ENCODE measurements at regions of chr1 and their contacts with region 1.

Region 1: GRCh38 chr1:231211005-231211857 is 29.8 kb upstream of the GNPAT start:
- DNase-seq: peak; percentile 71 to 88
- H3K4me3 ChIP-seq: peak overlapping the region; percentile 52
- H3K27ac ChIP-seq: no peak overlapping the region
- H3K4me1 ChIP-seq: no peaks in the 10 kb centered on the region
- H3K27me3 ChIP-seq: peaks cover 20% of the 10 kb centered on the region
- CTCF ChIP-seq: peak; percentile 95

Region 2: DNA sequence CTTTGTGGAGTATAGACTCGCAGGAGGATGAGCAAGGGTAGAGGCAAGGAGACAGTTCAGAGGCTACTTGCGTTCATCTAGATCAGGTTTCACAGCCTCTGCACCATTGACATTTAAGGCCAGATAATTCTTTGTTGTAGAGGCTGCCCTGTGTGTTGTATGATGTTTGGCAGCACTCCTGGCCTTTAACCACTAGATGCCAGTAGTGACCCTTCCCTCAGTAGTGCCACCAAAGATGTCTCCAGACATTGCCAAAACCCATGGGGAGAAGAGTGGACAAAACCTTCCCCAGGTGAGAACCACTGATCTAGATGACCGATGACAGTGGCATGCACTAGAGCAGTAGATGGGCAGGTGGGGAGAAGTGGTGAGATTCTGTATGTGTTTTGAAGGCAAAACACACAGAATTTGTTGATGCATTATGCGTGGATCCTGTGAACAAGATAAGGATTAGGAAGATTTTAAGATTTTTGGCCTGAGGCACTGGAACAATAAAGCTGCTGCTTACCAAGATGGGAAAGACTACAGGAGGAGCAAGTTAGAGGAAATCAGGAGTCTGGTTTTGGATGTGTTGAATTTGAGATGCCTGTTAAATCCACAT is 578.9 kb before region 1 on chr1:
- CTCF ChIA-PET with region 1: interaction called, 3 read pairs
- POLR2A ChIA-PET with region 1: no interaction called
- intact Hi-C with region 1: loop called (anchors 1 kb)
- DNase-seq: peak; percentile 44 to 53
- H3K4me3 ChIP-seq: no peak overlapping the region
- H3K27ac ChIP-seq: no peak overlapping the region
- H3K4me1 ChIP-seq: no peaks in the 10 kb centered on the region
- H3K27me3 ChIP-seq: peaks cover 37% of the 10 kb centered on the region
- CTCF ChIP-seq: peak; percentile 74

Region 3: GRCh38 chr1:230867903-230868735 is 343.1 kb before region 1 on chr1 and contains the start of gene C1orf198:
- CTCF ChIA-PET with region 1: no interaction called
- POLR2A ChIA-PET with region 1: no interaction called
- intact Hi-C with region 1: loop called (anchors 10 kb)
- DNase-seq: peak in 1 of 2 experiments; percentile 75
- H3K4me3 ChIP-seq: peak within 1 kb of the TSS; percentile 78
- H3K27ac ChIP-seq: peak within 1 kb of the TSS; percentile 61
- H3K4me1 ChIP-seq: peaks cover 37% of the 10 kb centered on the region
- H3K27me3 ChIP-seq: no peaks in the 10 kb centered on the region
- CTCF ChIP-seq: no peak; the same call in 1 of the 2 replicates
- total RNA-seq, gene C1orf198: 20.5 and 24.5 TPM in 2 replicates

Region 4: DNA sequence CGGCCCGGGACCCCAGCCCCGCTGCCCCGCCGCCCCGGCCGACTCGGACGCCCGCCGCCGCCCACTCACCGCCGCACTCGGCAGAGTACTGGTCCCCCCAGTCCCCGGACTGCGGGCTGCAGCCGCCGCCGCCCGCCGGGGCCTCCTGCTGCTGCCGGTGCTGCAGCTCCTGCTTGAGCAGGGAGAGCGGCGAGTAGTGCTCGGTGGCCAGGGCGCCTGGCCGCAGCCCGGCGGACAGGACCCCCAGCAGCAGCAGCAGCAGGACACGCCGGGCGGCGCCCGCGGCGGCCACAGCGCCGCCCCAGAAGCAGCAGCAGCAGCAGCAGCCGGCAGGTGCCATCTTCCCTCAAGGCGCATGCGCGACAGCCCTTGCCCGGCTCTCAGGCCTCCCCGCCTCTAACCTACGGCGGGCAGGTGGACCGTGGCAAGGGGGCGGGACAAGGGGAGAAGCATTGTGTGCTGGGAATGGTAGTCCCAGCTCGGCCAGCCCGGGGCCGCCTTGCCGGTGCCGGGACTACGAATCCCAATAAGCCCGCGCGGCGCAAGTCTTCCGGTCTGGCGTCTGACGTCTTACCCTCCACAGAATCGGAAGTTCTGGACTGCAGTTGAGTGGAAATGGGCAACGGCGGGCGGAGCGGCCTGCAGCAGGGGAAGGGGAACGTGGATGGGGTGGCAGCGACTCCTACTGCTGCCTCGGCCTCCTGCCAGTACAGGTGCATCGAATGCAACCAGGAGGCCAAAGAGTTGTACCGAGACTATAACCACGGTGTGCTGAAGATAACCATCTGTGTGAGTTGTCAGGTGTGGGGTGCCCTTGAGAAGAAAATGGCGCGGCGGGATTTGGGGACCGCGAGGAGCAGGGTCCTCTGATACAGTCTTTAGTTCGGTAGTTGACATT is 232.5 kb before region 1 on chr1 and contains the starts of genes ARV1 and TTC13:
- CTCF ChIA-PET with region 1: interaction called, 3 read pairs
- POLR2A ChIA-PET with region 1: no interaction called
- intact Hi-C with region 1: loop called (anchors 1 kb)
- DNase-seq: peak; percentile 97 to 98
- H3K4me3 ChIP-seq: peak within 1 kb of the TSS; percentile 86
- H3K27ac ChIP-seq: no peak within 1 kb of the TSS
- H3K4me1 ChIP-seq: peaks cover 19% of the 10 kb centered on the region
- H3K27me3 ChIP-seq: no peaks in the 10 kb centered on the region
- CTCF ChIP-seq: peak; percentile 50; the same call in 1 of the 2 replicates
- total RNA-seq, gene ARV1: 8.0 and 12.0 TPM in 2 replicates
- total RNA-seq, gene TTC13: 7.5 and 10.7 TPM in 2 replicates

Region 5: DNA sequence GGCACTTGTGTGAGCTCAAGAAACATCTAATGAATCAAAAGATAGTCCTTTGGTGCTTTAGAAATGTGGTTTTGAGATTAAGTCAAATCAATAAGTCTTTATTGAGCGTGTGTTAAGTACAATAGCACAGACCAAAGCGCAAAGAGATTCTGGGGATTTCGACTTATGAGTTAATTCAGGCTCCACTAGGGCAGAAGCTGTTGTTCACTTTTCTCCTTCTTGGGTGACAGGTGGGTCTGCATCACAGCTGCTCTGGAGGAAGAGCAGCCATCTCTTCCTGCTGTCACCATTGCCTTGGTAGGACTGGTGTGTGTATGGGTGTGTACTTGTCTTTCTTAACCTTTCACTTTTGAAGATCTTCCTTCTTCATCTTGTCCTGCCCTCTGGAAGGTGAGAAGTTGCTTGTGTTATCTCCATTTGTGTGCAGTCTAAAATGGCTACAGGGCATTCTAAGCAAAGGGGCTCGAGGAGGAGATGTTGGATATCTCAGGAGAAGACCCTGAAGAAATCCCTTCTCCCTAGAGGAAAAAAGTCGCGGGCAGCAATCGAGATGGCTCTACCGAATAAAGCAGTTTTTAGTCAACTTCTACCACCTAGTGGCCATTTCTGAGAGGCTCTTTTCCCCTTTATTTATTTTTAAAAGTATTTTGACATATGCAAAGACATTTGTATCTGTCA is 392.5 kb after region 1 on chr1:
- CTCF ChIA-PET with region 1: no interaction called
- POLR2A ChIA-PET with region 1: no interaction called
- intact Hi-C with region 1: loop called (anchors 5 kb)
- DNase-seq: peak; percentile 40 to 53
- H3K4me3 ChIP-seq: peak overlapping the region; percentile 66
- H3K27ac ChIP-seq: no peak overlapping the region
- H3K4me1 ChIP-seq: peaks cover 12% of the 10 kb centered on the region
- H3K27me3 ChIP-seq: no peaks in the 10 kb centered on the region
- CTCF ChIP-seq: peak; percentile 83

Measured in PC-9 (cell line).